ENCODE measurements at regions of chr12 and their contacts with region 1.

Region 1: GRCh38 chr12:119710352-119710964 is 42.5 kb downstream of the PRKAB1 start:
- DNase-seq: peak in 1 of 2 experiments; percentile 69
- H3K4me3 ChIP-seq: no peak overlapping the region
- H3K27ac ChIP-seq: no peak overlapping the region
- H3K4me1 ChIP-seq: no peaks in the 10 kb centered on the region
- H3K27me3 ChIP-seq: no peaks in the 10 kb centered on the region
- CTCF ChIP-seq: no peak

Region 2: GRCh38 chr12:119699199-119699765 is 11.2 kb before region 1 on chr12:
- CTCF ChIA-PET with region 1: interaction called, 4 read pairs
- POLR2A ChIA-PET with region 1: interaction called, 29 read pairs
- intact Hi-C with region 1: no loop called
- DNase-seq: no peak
- H3K4me3 ChIP-seq: no peak overlapping the region
- H3K27ac ChIP-seq: no peak overlapping the region
- H3K4me1 ChIP-seq: no peaks in the 10 kb centered on the region
- H3K27me3 ChIP-seq: no peaks in the 10 kb centered on the region
- CTCF ChIP-seq: no peak